ENCODE measurements at regions of chr12 and their contacts with region 1.

Region 1: GRCh38 chr12:51217968-51218606 is at the start of gene POU6F1:
- DNase-seq: no peak
- H3K4me3 ChIP-seq: peak within 1 kb of the TSS; percentile 72
- H3K27me3 ChIP-seq: no peaks in the 10 kb centered on the region
- CTCF ChIP-seq: peak; percentile 72
- polyA plus RNA-seq, gene POU6F1: 2.5 and 4.7 TPM in 2 replicates

Region 2: DNA sequence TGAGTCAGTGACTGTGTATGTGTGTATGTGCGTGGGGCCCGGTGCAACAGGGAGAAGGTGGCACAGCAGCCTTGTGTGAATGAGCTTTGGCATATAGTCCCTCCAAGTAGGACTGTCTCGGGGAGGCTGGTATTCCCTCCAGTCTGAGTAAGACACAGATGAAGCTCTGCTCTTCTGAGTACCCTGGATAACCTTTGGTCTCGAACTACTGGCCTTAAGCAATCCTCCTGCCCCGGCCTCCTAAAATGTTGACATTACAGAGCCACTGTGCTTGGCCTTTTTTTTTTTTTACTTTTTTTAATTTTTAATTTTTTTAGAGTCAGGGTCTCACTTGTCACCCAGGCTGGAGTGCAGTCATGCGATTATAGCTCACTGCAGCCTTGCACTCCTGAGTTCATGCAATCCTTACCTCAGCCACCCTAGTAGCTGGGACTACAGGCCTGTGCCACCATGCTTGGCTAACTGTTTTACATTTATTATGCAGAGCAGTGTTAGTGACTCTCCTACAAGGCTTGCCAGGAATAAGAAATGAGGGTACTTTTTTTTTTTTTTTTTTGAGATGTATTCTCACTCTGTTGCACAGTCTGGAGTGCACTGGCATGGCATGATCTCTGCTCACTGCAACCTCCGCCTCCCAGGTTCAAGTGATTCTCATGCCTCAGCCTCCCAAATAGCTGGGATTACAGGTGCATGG is 11.2 kb after region 1 on chr12:
- CTCF ChIA-PET with region 1: interaction called, 28 read pairs
- POLR2A ChIA-PET with region 1: no interaction called
- DNase-seq: no peak
- H3K4me3 ChIP-seq: no peak overlapping the region
- H3K27me3 ChIP-seq: no peaks in the 10 kb centered on the region
- CTCF ChIP-seq: no peak

Region 3: DNA sequence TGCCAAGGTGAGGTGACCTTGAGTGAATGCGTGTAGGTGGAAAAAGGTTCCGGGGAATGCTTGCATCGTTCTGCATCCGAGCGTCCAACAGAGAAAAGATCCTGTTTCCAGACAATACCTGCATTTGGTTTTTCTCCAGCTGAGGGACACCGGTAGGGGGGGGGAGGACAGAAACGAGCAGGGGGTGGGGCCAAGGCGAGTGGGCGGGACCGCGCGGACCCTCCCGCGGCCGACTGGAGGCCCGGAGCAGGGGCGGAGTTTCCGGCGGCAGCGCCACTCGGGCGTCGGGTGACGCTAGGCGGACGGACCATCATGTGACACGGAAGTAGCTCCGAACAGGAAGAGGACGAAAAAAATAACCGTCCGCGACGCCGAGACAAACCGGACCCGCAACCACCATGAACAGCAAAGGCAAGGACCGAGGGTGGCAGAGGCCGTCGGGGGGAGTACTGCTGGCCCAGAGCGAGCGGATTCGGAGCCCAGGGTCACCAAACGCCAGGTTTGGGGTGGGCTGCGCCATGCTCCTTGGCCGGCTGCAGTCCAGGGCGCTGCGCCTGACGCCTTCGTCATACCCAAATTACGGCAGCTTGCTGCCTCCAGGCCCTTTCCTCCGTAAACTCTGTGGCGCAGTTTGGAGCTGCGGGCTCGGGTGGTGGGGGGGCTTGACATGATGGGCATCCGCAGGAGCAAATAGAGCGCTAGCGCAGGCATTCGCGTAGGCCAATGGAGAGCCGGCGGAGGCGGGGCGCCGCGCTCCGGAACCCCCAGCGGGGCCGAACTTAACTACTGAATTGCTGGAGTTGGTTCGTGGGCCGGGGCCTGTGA is 20.6 kb after region 1 on chr12 and contains the start of gene DAZAP2:
- CTCF ChIA-PET with region 1: interaction called, 6 read pairs
- POLR2A ChIA-PET with region 1: interaction called, 22 read pairs
- DNase-seq: peak; percentile 72
- H3K4me3 ChIP-seq: peak within 1 kb of the TSS; percentile 75
- H3K27me3 ChIP-seq: no peaks in the 10 kb centered on the region
- CTCF ChIP-seq: peak; percentile 44
- polyA plus RNA-seq, gene DAZAP2: 288 and 433 TPM in 2 replicates

Region 4: DNA sequence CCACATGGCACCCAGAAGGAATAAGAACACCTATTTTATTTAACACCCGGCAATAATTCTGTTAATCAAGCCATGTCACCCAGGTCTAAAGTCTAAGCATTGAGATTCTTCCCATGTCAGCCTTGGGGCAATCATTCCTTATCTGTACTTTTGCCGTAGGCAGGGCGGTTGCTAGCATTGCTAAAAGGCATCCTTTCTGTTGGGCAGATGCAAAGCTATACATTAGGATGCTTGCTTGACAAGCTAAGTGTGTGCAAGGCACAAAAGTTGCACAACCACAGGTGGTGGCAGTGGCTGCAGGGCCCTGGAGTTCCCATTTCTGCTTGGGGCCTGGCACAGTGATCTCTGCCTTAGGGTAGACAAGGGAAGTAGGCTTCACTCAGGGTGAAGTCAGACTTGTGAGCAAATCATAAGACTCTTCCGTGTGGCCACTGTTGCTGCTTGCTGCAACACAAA is 185.6 kb after region 1 on chr12:
- CTCF ChIA-PET with region 1: no interaction called
- POLR2A ChIA-PET with region 1: no interaction called
- DNase-seq: no peak
- H3K4me3 ChIP-seq: no peak overlapping the region
- H3K27me3 ChIP-seq: no peaks in the 10 kb centered on the region
- CTCF ChIP-seq: no peak

Measured in BJ (cell line).